ENCODE measurements at regions of chr14 and their contacts with region 1.

Region 1: DNA sequence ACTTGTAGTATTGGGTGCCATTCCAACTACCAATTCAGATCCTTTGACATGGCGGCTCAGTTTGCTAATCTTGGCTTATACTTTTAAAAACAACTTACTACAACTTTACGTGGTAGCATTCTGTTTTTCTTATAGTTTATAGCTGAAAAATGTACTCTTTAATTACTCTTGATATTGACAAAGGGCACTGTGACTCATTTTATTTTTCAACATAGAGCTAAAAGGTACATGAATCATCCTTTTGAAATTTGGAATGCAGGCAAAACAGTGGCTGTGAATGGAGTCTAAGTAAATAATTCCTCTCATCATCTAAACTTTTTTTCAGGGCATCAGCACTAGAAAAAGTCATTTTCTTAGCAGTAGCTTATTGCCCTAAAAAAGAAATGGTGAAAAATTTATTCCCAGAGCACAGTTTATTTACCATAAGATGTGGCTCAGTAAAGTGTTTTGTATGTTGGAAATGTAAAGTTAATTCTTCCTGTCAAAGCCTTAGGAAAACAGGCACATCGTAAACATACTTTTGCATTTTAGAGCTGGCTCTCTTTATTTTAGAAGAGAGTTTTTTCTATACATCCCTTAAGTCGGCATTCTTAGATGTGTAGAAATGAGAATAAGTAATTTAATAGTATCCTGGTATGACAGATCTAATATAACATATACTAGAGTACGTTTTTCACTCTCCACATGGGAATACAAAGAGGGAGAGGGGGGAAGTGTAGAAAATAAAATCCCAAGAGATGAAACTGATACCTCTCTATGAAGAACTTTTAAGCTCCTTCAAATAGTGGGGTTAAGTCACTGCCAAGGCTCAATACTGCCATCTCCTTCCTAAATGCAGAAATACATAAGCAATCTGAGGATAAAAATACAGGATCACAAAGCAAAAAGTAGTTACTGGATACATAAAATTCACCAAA is 55.2 kb downstream of the SLC25A21 start:
- DNase-seq: peak; percentile 79
- H3K4me3 ChIP-seq: no peak overlapping the region
- H3K27ac ChIP-seq: peak overlapping the region; percentile 76
- H3K4me1 ChIP-seq: peaks cover 20% of the 10 kb centered on the region
- H3K27me3 ChIP-seq: no peaks in the 10 kb centered on the region
- CTCF ChIP-seq: peak; percentile 19 to 43
- POLR2A ChIP-seq: no peak

Region 2: DNA sequence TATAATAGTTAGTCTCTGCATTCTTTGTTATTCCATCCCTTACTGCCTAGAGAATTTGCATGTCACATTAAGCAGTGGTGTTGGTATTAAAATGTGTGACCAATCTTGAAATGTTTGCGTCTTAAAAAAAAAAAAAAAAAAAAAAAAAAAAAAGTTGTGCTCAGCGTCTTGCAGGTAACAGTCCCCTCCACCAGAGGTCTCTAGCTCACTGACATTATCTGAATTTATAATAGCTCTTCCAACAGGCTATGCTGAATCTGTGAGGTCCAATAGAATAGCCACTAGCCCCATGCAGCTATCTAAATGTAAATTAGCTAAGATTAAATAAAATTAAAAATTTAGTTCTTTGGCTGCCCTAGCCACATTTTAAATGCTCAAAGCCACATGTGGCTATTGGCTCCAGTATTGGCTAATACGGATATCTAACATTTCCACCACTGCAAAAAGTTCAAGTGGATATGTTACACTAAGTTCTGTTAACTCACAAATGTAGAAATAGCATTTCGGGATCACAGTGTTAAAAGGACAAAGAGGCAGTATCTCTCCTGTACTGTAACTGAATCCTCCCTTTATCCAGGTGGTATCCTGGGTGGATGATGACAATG is 563.4 kb before region 1 on chr14:
- CTCF ChIA-PET with region 1: interaction called, 67 read pairs
- POLR2A ChIA-PET with region 1: no interaction called
- dilution Hi-C with region 1: no loop called
- intact Hi-C with region 1: loop called (anchors 1 kb)
- DNase-seq: peak; percentile 49
- H3K4me3 ChIP-seq: no peak overlapping the region
- H3K27ac ChIP-seq: no peak overlapping the region
- H3K4me1 ChIP-seq: no peaks in the 10 kb centered on the region
- H3K27me3 ChIP-seq: peaks cover 3 to 6% of the 10 kb centered on the region in 2 experiments
- CTCF ChIP-seq: peak; percentile 56 to 61
- POLR2A ChIP-seq: no peak

Region 3: DNA sequence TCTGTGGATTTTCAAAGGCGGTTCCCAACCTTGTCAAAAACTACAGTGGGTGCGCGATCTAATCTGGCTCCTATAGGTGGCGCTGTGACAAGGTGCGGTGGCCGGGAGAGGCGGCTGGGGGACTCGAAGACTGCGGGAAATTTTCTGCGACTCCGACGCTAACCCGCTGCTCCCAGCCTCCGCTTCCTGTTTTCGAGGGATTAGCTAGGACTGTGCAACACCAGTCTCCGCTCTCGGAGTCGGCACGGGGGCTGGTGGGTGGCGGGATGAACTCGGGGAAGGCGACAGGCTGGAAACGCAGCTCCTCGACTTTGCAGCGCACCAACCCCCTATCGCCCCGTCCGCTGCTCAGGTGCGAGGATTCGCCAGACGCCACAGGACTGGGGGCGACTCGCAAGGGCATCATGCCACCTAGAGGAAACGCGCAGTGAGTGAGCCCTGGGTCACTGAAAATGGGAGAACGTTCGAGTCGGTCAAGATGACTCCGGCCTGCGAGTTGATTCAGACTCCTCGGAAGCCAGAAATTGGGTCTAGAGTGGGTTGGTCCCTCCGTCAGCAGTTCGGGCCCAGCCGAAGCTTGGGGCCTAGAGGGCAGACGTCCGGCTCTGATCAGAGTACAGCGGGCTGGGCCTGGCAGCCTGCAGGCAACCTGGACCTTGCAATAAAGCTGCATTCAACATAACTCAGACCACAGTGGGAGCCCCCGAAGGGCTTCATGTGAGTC is 461.1 kb before region 1 on chr14:
- CTCF ChIA-PET with region 1: interaction called, 5 read pairs
- POLR2A ChIA-PET with region 1: no interaction called
- dilution Hi-C with region 1: no loop called
- intact Hi-C with region 1: loop called (anchors 2 kb)
- DNase-seq: no peak
- H3K4me3 ChIP-seq: no peak overlapping the region
- H3K27ac ChIP-seq: no peak overlapping the region
- H3K4me1 ChIP-seq: peaks cover under 1% of the 10 kb centered on the region
- H3K27me3 ChIP-seq: peaks cover 87 to 100% of the 10 kb centered on the region in 2 experiments
- CTCF ChIP-seq: peak; percentile 44 to 54
- POLR2A ChIP-seq: no peak

Region 4: DNA sequence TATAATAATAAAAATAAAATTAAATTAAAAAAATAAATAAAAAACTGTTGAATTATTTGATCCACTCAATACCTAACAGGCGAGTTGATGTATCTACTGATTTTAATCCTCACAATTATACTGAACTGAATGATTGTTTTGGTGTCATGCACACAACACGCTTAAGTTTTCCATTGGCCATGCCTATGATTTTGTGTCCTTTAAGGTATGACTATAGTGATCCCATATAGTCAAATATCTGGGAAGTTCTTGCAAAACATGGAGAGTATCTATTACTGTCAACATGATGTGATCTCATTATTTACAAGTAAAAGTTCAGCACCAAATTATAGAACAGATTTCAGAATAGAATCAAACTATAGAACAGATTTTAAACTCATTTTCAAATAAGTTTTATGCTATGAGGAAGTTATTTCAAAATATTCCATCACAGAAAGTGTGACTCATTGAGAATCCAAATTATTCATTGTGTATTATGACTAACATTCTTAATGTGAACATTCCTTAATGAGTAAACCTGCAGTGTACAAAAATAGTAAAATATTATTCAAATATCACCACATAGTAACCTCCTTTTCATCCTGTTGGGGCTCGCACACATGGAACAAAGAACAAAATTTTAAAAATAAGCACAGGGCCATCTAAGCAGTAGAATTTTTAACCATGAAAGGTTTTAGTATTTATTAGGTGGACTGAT is 135.2 kb before region 1 on chr14:
- CTCF ChIA-PET with region 1: no interaction called
- POLR2A ChIA-PET with region 1: no interaction called
- dilution Hi-C with region 1: no loop called
- intact Hi-C with region 1: loop called (anchors 1 kb)
- DNase-seq: peak; percentile 73
- H3K4me3 ChIP-seq: no peak overlapping the region
- H3K27ac ChIP-seq: peak overlapping the region; percentile 55
- H3K4me1 ChIP-seq: peaks cover 7% of the 10 kb centered on the region
- H3K27me3 ChIP-seq: no peaks in the 10 kb centered on the region
- CTCF ChIP-seq: no peak
- POLR2A ChIP-seq: no peak

Region 5: GRCh38 chr14:37034410-37035285 is 82.5 kb before region 1 on chr14:
- CTCF ChIA-PET with region 1: interaction called, 7 read pairs
- POLR2A ChIA-PET with region 1: no interaction called
- dilution Hi-C with region 1: no loop called
- intact Hi-C with region 1: loop called (anchors 2 kb)
- DNase-seq: no peak
- H3K4me3 ChIP-seq: no peak overlapping the region
- H3K27ac ChIP-seq: no peak overlapping the region
- H3K4me1 ChIP-seq: peaks cover 28% of the 10 kb centered on the region
- H3K27me3 ChIP-seq: no peaks in the 10 kb centered on the region
- CTCF ChIP-seq: no peak
- POLR2A ChIP-seq: no peak

Region 6: GRCh38 chr14:37197421-37198272 is 80.5 kb after region 1 on chr14 and contains the start of gene MIPOL1:
- CTCF ChIA-PET with region 1: interaction called, 4 read pairs
- POLR2A ChIA-PET with region 1: no interaction called
- dilution Hi-C with region 1: no loop called
- intact Hi-C with region 1: loop called (anchors 2 kb)
- DNase-seq: peak; percentile 93
- H3K4me3 ChIP-seq: peak within 1 kb of the TSS; percentile 61 to 86 (median 86)
- H3K27ac ChIP-seq: peak within 1 kb of the TSS; percentile 97
- H3K4me1 ChIP-seq: peaks cover 52% of the 10 kb centered on the region
- H3K27me3 ChIP-seq: no peaks in the 10 kb centered on the region
- CTCF ChIP-seq: peak in 1 of 2 donors; percentile 49
- POLR2A ChIP-seq: peak; percentile 92
- total RNA-seq, gene MIPOL1: 31.3 and 33.5 TPM in 2 replicates